Activated CD8-positive, alpha-beta memory T cell treated with anti-CD3 and anti-CD28 coated beads, Interleukin-2, amount 10 ng/mL, durations not matched to agents 7 days and 5 days (primary cell): ENCODE measurements at regions of chr19 and their contacts with region 1.

Region 1: GRCh38 chr19:41206926-41207750 is 11.9 kb upstream of the AXL start:
- DNase-seq: no peak
- ATAC-seq: no peak
- H3K4me3 Mint-ChIP-seq: no peak overlapping the region
- H3K27ac Mint-ChIP-seq: no peak overlapping the region
- H3K4me1 Mint-ChIP-seq: peaks cover 11% of the 10 kb centered on the region
- H3K27me3 Mint-ChIP-seq: peaks cover 2% of the 10 kb centered on the region

Region 2: DNA sequence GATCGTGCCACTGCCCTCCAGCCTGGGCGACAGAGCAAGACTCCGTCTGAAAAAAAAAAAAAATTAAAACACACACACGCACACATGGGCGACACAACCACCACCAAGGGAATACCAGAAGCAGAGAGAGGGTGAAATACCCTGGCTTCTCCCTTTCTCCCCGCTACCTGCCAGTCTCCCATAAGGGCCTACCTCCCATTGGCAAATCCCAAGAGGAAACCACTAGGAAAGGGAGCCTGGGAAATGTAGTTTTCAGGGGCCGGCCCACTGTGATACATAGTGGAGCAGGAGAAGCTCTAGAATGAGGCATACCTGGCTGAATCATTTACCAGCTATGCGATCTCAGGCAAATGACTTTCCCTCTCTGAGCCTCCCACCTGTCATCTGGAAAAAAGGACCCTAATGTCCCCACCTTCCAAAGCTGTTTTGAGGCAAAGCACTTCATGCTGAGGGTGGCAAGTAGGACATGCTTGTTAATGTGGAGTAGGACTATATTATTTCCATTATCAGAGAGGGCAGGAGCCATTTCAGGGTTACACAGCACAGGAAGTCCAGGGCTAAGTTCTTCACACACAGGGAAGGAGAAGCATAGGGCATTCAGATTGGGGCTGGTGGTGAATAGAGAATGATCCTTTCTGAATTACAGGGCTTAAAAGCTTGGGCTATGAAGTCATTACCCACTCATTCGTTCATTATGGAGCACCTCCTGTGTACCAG is 42.7 kb after region 1 on chr19:
- CTCF ChIA-PET with region 1: interaction called, 11 read pairs
- DNase-seq: no peak
- ATAC-seq: no peak
- H3K4me3 Mint-ChIP-seq: no peak overlapping the region
- H3K27ac Mint-ChIP-seq: no peak overlapping the region
- H3K4me1 Mint-ChIP-seq: no peaks in the 10 kb centered on the region
- H3K27me3 Mint-ChIP-seq: peaks cover 8% of the 10 kb centered on the region